ENCODE measurements at regions of chr4 and their contacts with region 1.

Region 1: DNA sequence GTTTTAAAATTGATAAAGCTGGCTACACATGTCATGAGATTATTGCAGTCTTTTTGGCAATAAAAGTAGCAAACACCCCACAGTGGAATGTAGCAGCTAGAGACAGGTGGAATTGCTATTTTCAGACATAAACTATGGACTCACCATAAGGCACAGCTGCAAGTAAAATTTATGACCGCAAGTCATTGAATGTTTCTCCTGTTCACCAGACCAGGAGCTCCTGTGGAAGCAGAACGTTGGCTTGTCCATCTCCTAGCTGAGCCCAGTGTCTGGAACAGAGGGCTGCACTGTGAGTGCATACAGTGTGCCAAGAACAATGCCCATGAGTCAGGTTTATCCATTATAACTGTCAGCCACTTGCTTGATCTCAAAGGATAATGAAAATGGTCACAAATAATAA is 538.2 kb downstream of the INPP4B start:
- DNase-seq: no peak
- ATAC-seq: peak in 1 of 4 donors; percentile 50
- H3K4me3 ChIP-seq: no peak overlapping the region
- H3K27ac ChIP-seq: no peak overlapping the region
- H3K4me1 ChIP-seq: peaks cover 0 to 26% (median 2%) of the 10 kb centered on the region in 12 donors
- H3K27me3 ChIP-seq: no peaks in the 10 kb centered on the region
- CTCF ChIP-seq: no peak
- POLR2A ChIP-seq: no peak

Region 2: GRCh38 chr4:142293536-142293935 is 14.3 kb before region 1 on chr4:
- intact Hi-C with region 1: no loop called
- DNase-seq: no peak
- ATAC-seq: no peak
- H3K4me3 ChIP-seq: no peak overlapping the region
- H3K27ac ChIP-seq: no peak overlapping the region
- H3K4me1 ChIP-seq: peaks cover 0 to 11% (median 0%) of the 10 kb centered on the region in 12 donors
- H3K27me3 ChIP-seq: no peaks in the 10 kb centered on the region
- CTCF ChIP-seq: no peak
- POLR2A ChIP-seq: no peak

Region 3: GRCh38 chr4:142416711-142417275 is 108.9 kb after region 1 on chr4:
- intact Hi-C with region 1: no loop called
- DNase-seq: no peak
- ATAC-seq: peak in 2 of 4 donors; percentile 9 to 58
- H3K4me3 ChIP-seq: peak overlapping the region in 1 of 12 donors; percentile 3
- H3K27ac ChIP-seq: peak overlapping the region in 6 of 12 donors; percentile 4 to 74 (median 24)
- H3K4me1 ChIP-seq: peaks cover 0 to 16% (median 4%) of the 10 kb centered on the region in 12 donors
- H3K27me3 ChIP-seq: no peaks in the 10 kb centered on the region
- CTCF ChIP-seq: no peak
- POLR2A ChIP-seq: no peak

Region 4: DNA sequence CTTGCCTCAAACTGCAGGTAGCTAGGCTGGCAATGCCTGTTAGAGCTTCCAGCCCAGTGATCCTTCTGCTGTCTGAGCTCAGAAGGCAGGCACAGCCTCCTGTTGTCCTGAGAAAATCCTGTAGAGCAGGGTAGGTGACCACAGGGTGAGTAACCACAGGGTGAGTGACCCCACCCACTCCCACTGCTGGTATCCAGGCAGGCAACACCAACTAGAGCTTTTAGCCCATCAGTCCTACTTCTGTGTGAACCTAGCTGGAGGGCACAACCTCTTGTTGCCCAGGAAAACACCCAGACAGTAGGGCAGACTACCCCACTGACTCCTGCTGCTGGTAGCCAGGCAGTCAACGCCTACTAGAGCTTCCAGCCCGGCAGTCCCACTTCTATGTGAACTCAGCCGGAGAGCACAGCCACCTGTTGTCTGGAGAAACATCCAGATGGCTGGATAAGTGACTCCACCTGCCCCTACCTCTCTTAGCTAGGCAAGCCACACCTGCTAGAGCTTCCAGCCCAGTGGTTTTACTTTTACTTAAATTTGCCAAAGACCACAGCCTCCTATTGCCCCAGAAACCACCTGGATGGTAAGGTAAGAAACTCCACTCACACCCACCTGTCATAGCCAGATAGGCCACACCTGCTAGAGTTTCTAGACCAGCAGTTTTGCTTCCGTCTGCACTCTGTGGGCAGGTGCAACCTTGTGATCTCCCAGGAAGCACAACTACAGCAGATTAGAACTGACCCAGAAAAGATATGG is 166.7 kb after region 1 on chr4:
- intact Hi-C with region 1: loop called in 1 of 10 experiments (anchors 5 kb)
- DNase-seq: no peak
- ATAC-seq: peak in 2 of 4 donors; percentile 20 to 24
- H3K4me3 ChIP-seq: no peak overlapping the region
- H3K27ac ChIP-seq: no peak overlapping the region
- H3K4me1 ChIP-seq: peaks cover 0 to 10% (median 0%) of the 10 kb centered on the region in 12 donors
- H3K27me3 ChIP-seq: no peaks in the 10 kb centered on the region
- CTCF ChIP-seq: no peak
- POLR2A ChIP-seq: no peak

Region 5: DNA sequence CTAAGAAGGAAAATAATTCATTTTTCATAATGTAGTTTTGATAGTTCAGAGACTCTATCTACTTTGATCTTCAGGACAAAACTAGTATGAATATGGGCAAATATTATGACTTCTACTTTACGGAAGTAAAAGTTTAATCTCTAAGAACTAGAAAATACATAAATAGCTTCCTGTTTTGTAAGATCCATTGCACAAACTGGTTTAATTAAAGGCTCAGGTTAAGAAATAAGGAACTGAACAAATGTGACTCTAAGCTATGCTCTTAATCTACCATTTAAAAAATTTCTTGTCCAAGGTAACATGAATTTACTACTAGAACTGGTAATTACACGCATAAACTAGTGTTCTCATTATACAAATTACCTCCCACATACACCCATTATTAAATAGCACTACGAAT is 177.6 kb after region 1 on chr4:
- intact Hi-C with region 1: no loop called
- DNase-seq: no peak
- ATAC-seq: no peak
- H3K4me3 ChIP-seq: no peak overlapping the region
- H3K27ac ChIP-seq: no peak overlapping the region
- H3K4me1 ChIP-seq: peaks cover 0 to 7% (median 0%) of the 10 kb centered on the region in 12 donors
- H3K27me3 ChIP-seq: no peaks in the 10 kb centered on the region
- CTCF ChIP-seq: no peak
- POLR2A ChIP-seq: no peak

Region 6: DNA sequence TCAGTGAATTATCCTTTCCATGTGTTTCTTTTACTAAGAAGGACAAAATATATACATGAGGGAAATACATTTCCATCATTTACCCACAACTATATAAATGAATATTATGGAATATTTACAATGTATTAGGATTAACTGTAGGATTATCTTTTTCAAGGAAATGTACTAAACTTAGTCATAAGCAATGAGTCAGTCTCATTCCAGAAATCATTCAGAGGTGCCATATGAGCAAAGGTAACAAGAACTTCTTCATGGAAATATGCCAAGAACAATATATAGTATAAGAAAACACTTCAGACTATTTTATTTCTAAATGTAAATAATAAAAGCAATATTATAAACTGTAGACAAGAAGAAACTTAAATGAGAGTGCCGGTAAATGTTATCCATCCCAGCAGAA is 943.9 kb after region 1 on chr4:
- intact Hi-C with region 1: no loop called
- DNase-seq: no peak
- ATAC-seq: no peak
- H3K4me3 ChIP-seq: no peak overlapping the region
- H3K27ac ChIP-seq: no peak overlapping the region
- H3K4me1 ChIP-seq: peaks cover 0 to 6% (median 0%) of the 10 kb centered on the region in 12 donors
- H3K27me3 ChIP-seq: no peaks in the 10 kb centered on the region
- CTCF ChIP-seq: no peak
- POLR2A ChIP-seq: no peak